GM13976 (cell line): ENCODE measurements at regions of chr11 and their contacts with region 1.

Region 1: GRCh38 chr11:44911029-44911814 is 39.5 kb downstream of the TP53I11 start:
- DNase-seq: peak; percentile 89
- CTCF ChIP-seq: peak; percentile 70

Region 2: DNA sequence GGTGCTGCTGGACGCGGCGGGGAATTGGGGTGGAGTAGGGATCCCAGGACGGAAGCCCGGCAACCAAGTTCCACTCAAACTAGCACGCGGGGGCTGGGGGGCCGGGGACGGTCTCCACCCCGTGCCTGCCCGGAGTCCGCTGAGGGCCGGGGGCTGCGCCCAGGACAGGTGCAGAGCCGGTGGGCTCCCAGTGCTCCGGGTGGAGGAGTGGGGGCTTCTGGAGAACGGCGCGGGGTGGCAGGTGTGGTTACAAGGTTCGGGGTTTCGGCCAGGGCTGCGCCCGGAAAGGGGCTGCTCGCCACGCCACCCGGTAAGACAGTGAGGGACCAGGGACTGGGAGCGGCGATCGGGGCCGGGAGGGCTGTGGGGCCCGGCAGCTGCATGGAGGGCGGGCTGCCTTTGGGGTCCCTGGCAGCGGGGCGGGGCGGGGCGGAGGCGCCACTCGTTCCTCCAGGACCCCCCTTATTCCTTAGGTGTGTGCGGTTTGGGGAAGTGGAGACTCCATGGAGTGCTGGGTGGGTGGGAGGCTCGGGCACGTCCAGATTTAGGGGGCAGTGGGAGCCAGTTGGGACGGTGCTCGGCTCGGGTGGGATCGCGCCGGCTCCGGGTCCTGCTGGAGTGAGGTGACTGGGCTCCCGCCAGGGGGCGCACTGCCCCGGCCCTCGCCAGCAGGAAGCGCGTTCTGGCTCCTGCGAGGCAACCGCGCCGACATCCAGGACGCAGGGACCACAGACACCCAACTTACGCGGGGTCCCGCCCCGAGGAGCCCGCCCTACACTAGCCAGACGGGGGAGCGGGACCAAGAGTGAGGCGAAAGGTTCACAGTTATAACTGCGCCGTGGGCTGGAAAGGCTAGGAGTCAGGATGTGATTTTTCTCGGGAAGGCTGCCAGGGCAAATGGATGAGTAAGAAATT is 183.6 kb before region 1 on chr11:
- in situ Hi-C with region 1: loop called (anchors 10 kb)
- DNase-seq: peak; percentile 93
- CTCF ChIP-seq: peak; percentile 96

Region 3: GRCh38 chr11:45906096-45906682 is 995.0 kb after region 1 on chr11:
- in situ Hi-C with region 1: no loop called
- DNase-seq: no peak
- CTCF ChIP-seq: no peak